Left lung (tissue), 14 donors: ENCODE measurements at regions of chr4 and their contacts with region 1.

Region 1: DNA sequence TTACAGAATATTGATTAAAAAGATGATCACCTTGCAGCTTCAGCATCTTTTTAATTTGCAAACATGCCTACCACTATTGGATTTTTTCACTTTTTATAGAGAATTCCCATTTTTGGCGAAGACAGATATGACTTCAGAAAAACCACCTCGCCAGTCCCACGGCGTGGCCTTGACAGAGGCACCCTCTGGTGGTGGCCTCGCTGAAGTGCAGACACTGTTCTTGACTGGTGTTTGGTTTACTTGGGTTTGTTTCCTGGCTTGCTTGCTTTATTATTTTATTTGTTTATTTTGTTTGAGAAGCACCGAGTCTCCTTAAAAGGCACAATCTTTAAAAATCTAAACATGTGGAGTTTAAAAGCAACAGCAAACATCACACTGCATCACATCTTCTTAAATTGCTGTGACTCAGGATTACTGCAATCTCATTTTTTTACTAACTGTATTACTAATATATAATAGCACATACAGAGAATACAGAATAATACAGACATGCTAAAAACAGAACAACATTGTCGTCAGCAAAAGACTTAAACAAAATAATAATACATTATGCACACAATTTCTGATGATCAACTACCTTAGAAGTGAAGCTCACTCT is 13.1 kb upstream of the AMTN start:
- DNase-seq: peak; percentile 46 to 82 (median 59)
- ATAC-seq: peak; percentile 90
- H3K4me3 ChIP-seq: no peak overlapping the region
- H3K27ac ChIP-seq: no peak overlapping the region
- H3K4me1 ChIP-seq: no peaks in the 10 kb centered on the region
- H3K27me3 ChIP-seq: no peaks in the 10 kb centered on the region
- CTCF ChIP-seq: peak; percentile 82 to 85

Region 2: GRCh38 chr4:69896530-69897116 is 608.6 kb before region 1 on chr4:
- intact Hi-C with region 1: loop called in 1 of 2 experiments (anchors 10 kb)
- DNase-seq: peak in 1 of 4 donors; percentile 14
- ATAC-seq: no peak
- H3K4me3 ChIP-seq: no peak overlapping the region
- H3K27ac ChIP-seq: no peak overlapping the region
- H3K4me1 ChIP-seq: no peaks in the 10 kb centered on the region
- H3K27me3 ChIP-seq: no peaks in the 10 kb centered on the region
- CTCF ChIP-seq: peak; percentile 10 to 23